Right ventricle myocardium superior (tissue), 1 donor: ENCODE measurements at regions of chr22 and their contacts with region 1.

Region 1: DNA sequence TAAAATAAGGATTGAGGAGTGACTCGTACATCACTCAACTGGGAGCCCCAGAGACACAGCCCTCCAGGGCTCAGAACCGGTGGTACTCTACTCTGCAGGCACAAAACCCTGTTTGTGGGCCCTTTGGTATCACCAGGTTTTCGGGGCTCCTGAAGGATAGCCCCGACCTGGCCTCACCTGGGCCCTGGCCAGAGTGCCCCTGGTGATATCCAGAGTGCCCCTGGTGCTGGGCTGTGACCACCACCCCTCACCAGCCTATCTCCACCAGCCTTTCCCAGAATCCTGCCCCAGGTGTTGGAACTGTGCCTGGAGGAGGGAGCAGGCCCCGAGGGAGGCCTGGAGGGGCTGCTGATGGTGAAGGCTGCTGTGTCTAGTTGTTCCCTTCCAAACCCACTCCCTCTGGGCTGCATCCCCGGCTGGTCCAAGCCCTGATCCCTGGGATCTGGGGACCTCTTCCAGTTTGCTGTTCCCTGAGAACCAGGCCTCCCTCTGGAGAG is 2.2 kb upstream of the GGT5 start:
- DNase-seq: no peak
- ATAC-seq: peak; percentile 7

Region 2: GRCh38 chr22:24198682-24199052 is 48.4 kb before region 1 on chr22:
- intact Hi-C with region 1: loop called (anchors 2 kb)
- DNase-seq: no peak
- ATAC-seq: no peak

Region 3: DNA sequence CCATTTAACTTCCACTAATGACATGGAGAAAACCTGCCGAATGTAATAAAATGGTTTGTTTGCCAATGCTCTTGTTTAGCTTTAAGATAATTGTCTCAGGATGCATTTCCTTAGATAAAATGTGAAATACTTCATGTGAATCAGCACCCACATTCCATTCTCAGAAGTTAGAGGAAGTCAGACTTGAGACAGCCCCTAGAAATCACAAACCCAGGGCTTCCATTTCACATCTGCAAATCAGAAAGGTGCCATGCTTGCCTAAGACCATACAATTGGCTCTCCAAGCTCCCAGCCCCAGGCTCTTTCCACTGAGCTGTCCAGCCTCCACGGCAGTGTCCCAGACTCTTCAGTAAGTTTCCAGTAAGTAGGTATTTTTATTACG is 144.8 kb after region 1 on chr22:
- intact Hi-C with region 1: no loop called
- DNase-seq: no peak
- ATAC-seq: no peak